ENCODE measurements at regions of chr14 and their contacts with region 1.

Region 1: GRCh38 chr14:94056579-94057308 is 24.3 kb downstream of the DDX24 start:
- DNase-seq: peak in 2 of 5 donors; percentile 22 to 42
- H3K4me3 ChIP-seq: no peak overlapping the region
- H3K4me3 Mint-ChIP-seq: peak overlapping the region in 5 of 8 donors; percentile 4 to 63 (median 22)
- H3K27ac ChIP-seq: peak overlapping the region; percentile 18
- H3K27ac Mint-ChIP-seq: peak overlapping the region; percentile 36 to 85 (median 77)
- H3K4me1 ChIP-seq: peaks cover 54% of the 10 kb centered on the region
- H3K4me1 Mint-ChIP-seq: peaks cover 47 to 86% (median 59%) of the 10 kb centered on the region in 4 donors
- H3K27me3 ChIP-seq: no peaks in the 10 kb centered on the region
- H3K27me3 Mint-ChIP-seq: no peaks in the 10 kb centered on the region

Region 2: GRCh38 chr14:94103554-94104150 is 46.9 kb after region 1 on chr14:
- CTCF ChIA-PET with region 1: no interaction called
- POLR2A ChIA-PET with region 1: no interaction called
- intact Hi-C with region 1: loop called (anchors 2 kb)
- DNase-seq: no peak
- H3K4me3 ChIP-seq: no peak overlapping the region
- H3K4me3 Mint-ChIP-seq: no peak overlapping the region
- H3K27ac ChIP-seq: no peak overlapping the region
- H3K27ac Mint-ChIP-seq: no peak overlapping the region
- H3K4me1 ChIP-seq: no peaks in the 10 kb centered on the region
- H3K4me1 Mint-ChIP-seq: no peaks in the 10 kb centered on the region
- H3K27me3 ChIP-seq: no peaks in the 10 kb centered on the region
- H3K27me3 Mint-ChIP-seq: no peaks in the 10 kb centered on the region